ENCODE measurements at regions of chr4 and their contacts with region 1.

Region 1: DNA sequence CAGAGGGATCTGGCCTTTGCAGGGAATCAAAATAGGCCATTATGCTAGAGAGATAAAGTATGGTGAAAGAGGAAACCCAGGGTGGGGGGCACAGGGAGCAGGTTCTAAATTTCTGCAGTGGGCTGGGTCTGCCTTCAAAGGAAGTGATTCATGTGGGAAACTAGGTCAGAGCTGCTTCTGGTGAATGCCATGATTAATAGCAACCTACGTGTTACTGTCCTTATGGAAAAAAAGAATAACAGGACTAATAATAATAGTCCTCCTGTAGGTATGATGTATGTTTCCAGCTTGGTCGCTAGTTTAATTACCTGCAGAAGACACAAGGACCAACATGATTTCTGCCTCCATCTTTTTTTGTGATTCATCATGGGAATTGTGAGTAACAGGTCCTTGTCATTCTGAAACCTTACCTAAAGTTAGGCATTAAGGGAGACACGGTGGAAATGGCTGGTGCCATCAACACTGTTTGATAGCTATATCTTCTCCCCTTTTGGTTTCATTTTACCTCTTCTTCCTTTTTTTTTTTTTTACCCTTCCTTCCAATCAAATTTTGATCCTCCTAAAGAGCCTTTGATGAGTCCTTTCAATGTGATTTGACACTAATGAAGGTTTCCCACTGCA is 180.4 kb downstream of the CPEB2 start:
- DNase-seq: peak; percentile 44
- H3K4me3 Mint-ChIP-seq: peak overlapping the region; percentile 35
- H3K27ac Mint-ChIP-seq: peak overlapping the region; percentile 64
- H3K4me1 Mint-ChIP-seq: peaks cover 24% of the 10 kb centered on the region
- H3K27me3 Mint-ChIP-seq: no peaks in the 10 kb centered on the region

Region 2: GRCh38 chr4:14984448-14984847 is 198.3 kb before region 1 on chr4:
- CTCF ChIA-PET with region 1: no interaction called
- POLR2A ChIA-PET with region 1: no interaction called
- intact Hi-C with region 1: no loop called
- DNase-seq: no peak
- H3K4me3 Mint-ChIP-seq: no peak overlapping the region
- H3K27ac Mint-ChIP-seq: no peak overlapping the region
- H3K4me1 Mint-ChIP-seq: no peaks in the 10 kb centered on the region
- H3K27me3 Mint-ChIP-seq: peaks cover 10% of the 10 kb centered on the region

Region 3: DNA sequence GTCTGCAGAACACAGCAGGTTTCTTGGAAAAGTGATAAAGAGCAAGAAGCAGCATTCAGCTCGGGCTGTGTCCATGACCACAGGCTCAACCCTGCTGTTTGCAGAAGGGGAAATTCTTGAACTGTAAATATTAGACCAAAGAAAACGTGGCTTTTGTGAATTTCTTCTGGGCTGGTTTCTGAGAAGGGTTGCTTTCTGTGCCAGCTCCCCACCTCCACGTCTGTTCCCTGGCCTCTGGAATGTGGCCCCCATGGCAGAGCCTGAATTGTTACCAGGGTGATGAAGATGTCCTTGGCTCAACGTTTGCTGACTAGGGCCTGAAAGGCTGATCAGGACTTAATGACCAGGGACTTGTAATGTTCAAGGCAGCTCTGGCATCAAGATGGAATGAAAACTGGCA is 64.4 kb before region 1 on chr4:
- CTCF ChIA-PET with region 1: no interaction called
- POLR2A ChIA-PET with region 1: no interaction called
- intact Hi-C with region 1: loop called (anchors 2 kb)
- DNase-seq: no peak
- H3K4me3 Mint-ChIP-seq: no peak overlapping the region
- H3K27ac Mint-ChIP-seq: no peak overlapping the region
- H3K4me1 Mint-ChIP-seq: peaks cover 10% of the 10 kb centered on the region
- H3K27me3 Mint-ChIP-seq: peaks cover 19% of the 10 kb centered on the region

Region 4: GRCh38 chr4:15144249-15144966 is 38.3 kb before region 1 on chr4:
- CTCF ChIA-PET with region 1: no interaction called
- POLR2A ChIA-PET with region 1: no interaction called
- intact Hi-C with region 1: no loop called
- DNase-seq: no peak
- H3K4me3 Mint-ChIP-seq: no peak overlapping the region
- H3K27ac Mint-ChIP-seq: no peak overlapping the region
- H3K4me1 Mint-ChIP-seq: no peaks in the 10 kb centered on the region
- H3K27me3 Mint-ChIP-seq: peaks cover 2% of the 10 kb centered on the region

Region 5: GRCh38 chr4:15231265-15232091 is 48.8 kb after region 1 on chr4:
- CTCF ChIA-PET with region 1: interaction called, 3 read pairs
- POLR2A ChIA-PET with region 1: no interaction called
- intact Hi-C with region 1: loop called (anchors 2 kb)
- DNase-seq: peak; percentile 81
- H3K4me3 Mint-ChIP-seq: no peak overlapping the region
- H3K27ac Mint-ChIP-seq: no peak overlapping the region
- H3K4me1 Mint-ChIP-seq: peaks cover 28% of the 10 kb centered on the region
- H3K27me3 Mint-ChIP-seq: no peaks in the 10 kb centered on the region

Region 6: GRCh38 chr4:15868111-15868510 is 685.4 kb after region 1 on chr4:
- CTCF ChIA-PET with region 1: no interaction called
- POLR2A ChIA-PET with region 1: no interaction called
- intact Hi-C with region 1: loop called (anchors 10 kb)
- DNase-seq: peak; percentile 28
- H3K4me3 Mint-ChIP-seq: no peak overlapping the region
- H3K27ac Mint-ChIP-seq: no peak overlapping the region
- H3K4me1 Mint-ChIP-seq: no peaks in the 10 kb centered on the region
- H3K27me3 Mint-ChIP-seq: peaks cover 4% of the 10 kb centered on the region